Posterior cingulate gyrus (tissue), 11 donors: ENCODE measurements at regions of chr10 and their contacts with region 1.

Region 1: DNA sequence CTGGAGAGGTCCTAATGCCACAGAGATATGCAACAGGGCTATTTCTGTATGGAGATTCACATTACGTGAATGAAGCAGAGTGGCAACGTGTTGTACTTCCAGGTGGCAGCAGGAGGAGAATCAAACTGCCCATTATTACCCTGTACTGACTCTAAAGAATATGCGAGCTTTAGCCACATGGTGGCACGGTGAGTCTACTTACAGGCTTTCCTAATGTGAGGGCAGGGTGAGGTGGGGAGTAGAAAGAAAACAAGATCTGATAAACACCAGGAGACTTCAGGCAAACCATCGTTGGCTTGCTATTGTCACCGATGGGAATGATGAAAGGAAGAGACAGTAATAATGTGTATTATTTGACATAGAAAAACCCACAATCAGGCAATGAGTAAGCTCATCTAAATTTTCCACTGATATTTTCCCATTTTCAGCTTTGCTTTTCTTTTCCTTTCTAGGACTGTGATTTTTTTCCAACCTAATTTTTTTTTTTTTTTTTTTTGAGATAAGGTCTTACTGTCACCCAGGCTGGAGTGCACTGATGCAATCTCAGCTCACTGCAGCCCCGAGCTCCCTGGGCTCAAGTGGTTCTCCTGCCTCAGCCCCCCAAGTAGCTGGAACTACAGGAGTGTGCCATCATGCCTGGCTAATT is 164.3 kb downstream of the BTAF1 start:
- DNase-seq: peak in 6 of 10 donors; percentile 32 to 90 (median 63)

Region 2: GRCh38 chr10:91875779-91876178 is 212.1 kb before region 1 on chr10:
- intact Hi-C with region 1: no loop called
- DNase-seq: no peak

Region 3: DNA sequence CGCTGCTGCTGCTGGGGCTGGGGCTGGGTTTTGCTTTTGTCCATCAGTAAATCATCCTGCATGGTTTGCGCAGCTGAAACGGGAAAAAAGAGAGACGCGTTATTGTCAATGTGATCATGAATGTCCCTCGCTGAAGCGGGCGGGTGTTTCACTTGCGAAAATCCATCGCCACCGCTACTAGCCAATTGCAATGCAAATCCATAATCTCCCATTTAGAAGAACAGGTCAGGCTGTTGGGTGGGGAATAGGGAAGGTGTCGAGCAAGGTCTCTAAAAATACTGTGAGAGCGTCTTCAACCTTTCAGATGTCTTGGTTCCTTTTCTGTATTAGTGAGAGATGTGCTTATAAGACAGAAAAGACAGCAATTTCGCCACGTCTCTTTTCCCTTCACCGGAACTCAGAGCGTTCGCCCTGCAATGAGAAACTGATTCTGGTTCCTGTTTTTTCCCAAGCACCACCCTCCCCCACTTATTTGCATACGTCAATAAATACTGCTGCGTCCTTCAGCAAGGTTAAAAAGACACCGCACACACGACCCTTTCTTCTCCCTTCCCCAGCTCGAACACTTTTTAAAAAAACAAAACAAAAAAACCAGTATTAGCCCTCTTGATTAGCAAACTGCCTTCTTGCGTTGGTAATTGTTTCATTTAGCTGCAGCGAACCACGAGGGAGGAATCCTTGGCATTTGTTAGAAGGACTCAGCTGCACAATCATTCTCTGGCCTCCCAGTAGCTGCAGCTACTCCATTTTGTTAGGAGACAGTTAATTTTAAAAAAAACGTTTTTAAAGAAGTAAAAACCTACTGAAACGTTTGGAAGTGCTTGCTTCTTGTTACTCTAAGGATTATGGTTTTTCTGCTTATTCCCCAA is 152.7 kb after region 1 on chr10:
- intact Hi-C with region 1: loop called (anchors 5 kb)
- DNase-seq: peak; percentile 32 to 91 (median 62)

Region 4: GRCh38 chr10:92290837-92291615 is 203.2 kb after region 1 on chr10 and contains the starts of genes CPEB3 and MARCHF5:
- intact Hi-C with region 1: loop called (anchors 2 kb)
- DNase-seq: peak; percentile 87 to 99 (median 96)

Region 5: DNA sequence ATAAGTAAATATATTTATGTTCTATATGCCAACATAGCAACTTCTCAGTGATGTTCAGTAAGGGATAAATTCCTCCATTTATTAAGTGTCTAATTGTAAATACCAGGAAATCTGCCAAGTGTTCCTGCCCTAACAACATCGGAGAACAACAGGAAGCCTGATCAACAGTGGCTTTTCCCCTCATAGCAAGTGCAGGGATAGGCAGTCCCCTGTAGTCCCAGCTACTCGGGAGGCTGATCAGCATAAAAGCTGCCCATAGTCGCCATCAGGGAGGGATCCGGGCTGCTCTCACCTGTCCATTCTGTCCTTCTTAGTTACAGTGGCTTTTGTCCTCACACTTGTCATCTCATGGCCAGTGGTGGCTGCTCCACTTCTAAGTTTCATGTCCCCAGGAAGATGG is 344.7 kb after region 1 on chr10:
- intact Hi-C with region 1: loop called (anchors 1 kb)
- DNase-seq: no peak